Ovary (tissue), 10 donors: ENCODE measurements at regions of chr1 and their contacts with region 1.

Region 1: DNA sequence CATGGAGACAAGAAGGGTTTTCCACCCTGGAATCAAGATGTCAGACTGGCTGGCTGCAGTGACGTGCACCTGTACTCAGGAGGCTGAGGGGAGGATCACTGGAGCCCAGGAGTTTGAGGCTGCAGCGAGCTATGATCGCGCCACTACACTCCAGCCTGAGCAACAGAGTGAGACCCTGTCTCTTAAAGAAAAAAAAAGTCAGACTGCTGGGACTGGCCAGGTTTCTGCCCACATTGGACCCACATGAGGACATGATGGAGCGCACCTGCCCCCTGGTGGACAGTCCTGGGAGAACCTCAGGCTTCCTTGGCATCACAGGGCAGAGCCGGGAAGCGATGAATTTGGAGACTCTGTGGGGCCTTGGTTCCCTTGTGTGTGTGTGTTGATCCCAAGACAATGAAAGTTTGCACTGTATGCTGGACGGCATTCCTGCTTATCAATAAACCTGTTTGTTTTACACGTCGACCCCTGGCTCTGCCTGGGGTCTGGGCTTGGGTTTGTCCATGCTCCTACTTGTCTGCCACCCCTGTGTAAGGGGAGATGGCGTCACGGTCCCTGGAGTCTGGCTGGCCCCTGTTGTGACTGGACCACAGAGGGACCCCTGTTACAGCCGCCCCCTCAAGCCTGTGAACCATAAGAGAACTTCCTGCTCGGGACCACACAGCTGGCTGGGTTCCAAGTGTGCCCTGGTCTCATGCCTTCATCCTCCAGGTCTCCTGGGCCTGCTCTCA is 20.9 kb upstream of the VPS13D start:
- DNase-seq: peak; percentile 80 to 93 (median 91)
- H3K4me3 ChIP-seq: no peak overlapping the region
- H3K27ac ChIP-seq: no peak overlapping the region
- H3K4me1 ChIP-seq: peaks cover 3% of the 10 kb centered on the region
- H3K27me3 ChIP-seq: no peaks in the 10 kb centered on the region
- CTCF ChIP-seq: peak; percentile 86 to 97 (median 96)
- EP300 ChIP-seq: no peak
- POLR2A ChIP-seq: peak; percentile 29

Region 2: GRCh38 chr1:12124693-12125421 is 84.1 kb before region 1 on chr1:
- intact Hi-C with region 1: loop called (anchors 1 to 2 kb)
- DNase-seq: peak; percentile 80 to 87 (median 84)
- H3K4me3 ChIP-seq: no peak overlapping the region
- H3K27ac ChIP-seq: no peak overlapping the region
- H3K4me1 ChIP-seq: peaks cover 4% of the 10 kb centered on the region
- H3K27me3 ChIP-seq: no peaks in the 10 kb centered on the region
- CTCF ChIP-seq: peak; percentile 75 to 97 (median 93)
- EP300 ChIP-seq: no peak
- POLR2A ChIP-seq: no peak